Activated CD4-positive, alpha-beta T cell treated with anti-CD3 and anti-CD28 coated beads for 36 hours (primary cell): ENCODE measurements at regions of chr20 and their contacts with region 1.

Region 1: DNA sequence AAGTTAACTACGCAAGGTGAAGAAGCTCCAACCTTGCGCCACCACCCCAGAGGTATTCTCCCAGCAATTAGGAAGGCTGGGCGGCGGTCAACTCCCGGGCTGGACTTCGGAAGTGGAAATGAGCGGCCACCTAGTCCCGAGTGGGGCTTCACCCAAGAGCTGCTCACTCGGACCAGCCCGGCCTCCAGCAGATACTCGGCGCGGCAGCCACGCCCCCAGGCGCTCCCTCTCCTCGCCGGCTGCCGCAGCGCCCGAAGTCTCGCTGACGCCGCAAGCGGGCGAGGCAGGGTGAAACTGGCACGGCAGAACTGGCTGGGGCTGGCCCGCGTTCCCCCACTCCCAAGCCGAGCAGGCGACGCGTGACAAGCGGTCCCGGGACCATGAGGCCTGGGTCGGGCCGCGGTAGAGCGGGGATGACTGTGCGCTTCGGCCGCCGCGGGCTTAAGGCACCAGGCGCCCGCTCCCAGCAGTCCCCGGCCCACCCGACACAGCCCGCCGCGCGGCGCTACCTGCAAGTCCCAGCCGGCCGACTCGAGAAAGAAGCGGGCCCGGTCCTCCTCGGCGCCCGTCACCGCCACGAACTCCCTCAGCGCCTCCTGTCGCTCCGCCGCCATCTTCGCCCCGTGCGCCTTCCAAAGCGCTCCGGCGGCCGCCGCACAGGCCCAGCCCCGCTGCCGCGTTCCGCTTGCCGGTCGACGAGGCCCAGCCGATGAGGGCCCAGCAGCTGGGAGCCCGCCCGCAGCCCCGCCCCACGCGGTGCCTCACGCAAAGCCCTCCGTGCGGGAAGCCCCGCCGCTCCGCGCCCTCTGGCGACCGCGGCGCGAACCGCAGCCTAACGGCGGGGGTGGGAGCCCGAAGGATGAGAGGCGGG is at the start of gene NSFL1C:
- DNase-seq: peak; percentile 99
- ATAC-seq: peak; percentile 96
- H3K4me3 Mint-ChIP-seq: peak within 1 kb of the TSS; percentile 85
- H3K27ac Mint-ChIP-seq: peak within 1 kb of the TSS; percentile 85
- H3K4me1 Mint-ChIP-seq: peaks cover 42% of the 10 kb centered on the region
- H3K27me3 Mint-ChIP-seq: peaks cover 6% of the 10 kb centered on the region
- total RNA-seq, gene NSFL1C: 71.3 to 78.1 TPM

Region 2: GRCh38 chr20:1118336-1119127 is 347.9 kb before region 1 on chr20 and contains the start of gene PSMF1:
- CTCF ChIA-PET with region 1: interaction called, 4 read pairs
- POLR2A ChIA-PET with region 1: no interaction called
- intact Hi-C with region 1: loop called (anchors 1 to 10 kb)
- DNase-seq: peak; percentile 97
- ATAC-seq: peak; percentile 97
- H3K4me3 Mint-ChIP-seq: peak within 1 kb of the TSS; percentile 94
- H3K27ac Mint-ChIP-seq: peak within 1 kb of the TSS; percentile 93
- H3K4me1 Mint-ChIP-seq: peaks cover 49% of the 10 kb centered on the region
- H3K27me3 Mint-ChIP-seq: no peaks in the 10 kb centered on the region
- total RNA-seq, gene PSMF1: 143 to 178 TPM

Region 3: DNA sequence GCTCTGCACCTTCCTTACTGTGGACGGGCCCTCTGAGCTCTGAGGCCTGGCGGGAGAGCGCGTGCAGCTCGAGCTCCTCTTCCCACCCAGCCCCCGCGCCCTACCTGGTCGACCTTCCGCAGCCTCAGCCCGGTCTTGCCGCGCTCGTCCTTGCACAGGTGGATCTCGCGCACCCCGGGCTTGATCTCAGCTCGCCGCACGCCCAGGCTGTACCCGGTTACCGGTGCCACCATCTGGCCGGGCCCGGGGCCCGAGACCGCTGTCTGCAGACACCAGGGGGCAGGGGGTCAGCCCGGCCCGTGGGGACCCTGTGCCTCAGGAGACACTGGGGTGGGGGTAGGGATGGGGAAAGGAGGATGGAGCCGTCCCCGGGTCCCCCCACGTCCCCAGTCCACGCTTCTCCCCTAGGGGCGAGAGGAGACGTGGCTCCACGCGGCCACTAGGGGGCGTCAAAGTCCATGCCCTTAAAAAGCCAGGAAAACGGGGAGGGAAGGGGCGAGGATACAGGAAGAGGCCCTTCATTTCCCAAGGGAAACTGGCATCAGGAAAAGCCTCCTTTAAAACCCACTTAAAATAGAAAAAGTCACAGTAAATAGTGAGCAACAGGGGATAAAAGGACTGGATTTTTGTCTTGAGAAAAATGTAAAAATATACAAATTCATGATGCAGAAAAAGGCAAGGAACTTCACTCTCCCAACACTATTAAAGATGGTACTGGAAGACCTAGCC is 153.0 kb before region 1 on chr20:
- CTCF ChIA-PET with region 1: interaction called, 4 read pairs
- POLR2A ChIA-PET with region 1: interaction called, 3 read pairs
- intact Hi-C with region 1: loop called in 1 of 2 experiments (anchors 1 kb)
- DNase-seq: peak; percentile 82
- ATAC-seq: peak; percentile 89
- H3K4me3 Mint-ChIP-seq: no peak overlapping the region
- H3K27ac Mint-ChIP-seq: no peak overlapping the region
- H3K4me1 Mint-ChIP-seq: peaks cover 3% of the 10 kb centered on the region
- H3K27me3 Mint-ChIP-seq: no peaks in the 10 kb centered on the region

Region 4: GRCh38 chr20:1392823-1393506 is 73.5 kb before region 1 on chr20 and contains the start of gene FKBP1A:
- CTCF ChIA-PET with region 1: interaction called, 3 read pairs
- POLR2A ChIA-PET with region 1: no interaction called
- intact Hi-C with region 1: loop called (anchors 1 kb)
- DNase-seq: peak; percentile 95
- ATAC-seq: peak; percentile 82
- H3K4me3 Mint-ChIP-seq: peak within 1 kb of the TSS; percentile 93
- H3K27ac Mint-ChIP-seq: peak within 1 kb of the TSS; percentile 94
- H3K4me1 Mint-ChIP-seq: peaks cover 56% of the 10 kb centered on the region
- H3K27me3 Mint-ChIP-seq: no peaks in the 10 kb centered on the region
- total RNA-seq, gene FKBP1A: 265 to 316 TPM

Region 5: DNA sequence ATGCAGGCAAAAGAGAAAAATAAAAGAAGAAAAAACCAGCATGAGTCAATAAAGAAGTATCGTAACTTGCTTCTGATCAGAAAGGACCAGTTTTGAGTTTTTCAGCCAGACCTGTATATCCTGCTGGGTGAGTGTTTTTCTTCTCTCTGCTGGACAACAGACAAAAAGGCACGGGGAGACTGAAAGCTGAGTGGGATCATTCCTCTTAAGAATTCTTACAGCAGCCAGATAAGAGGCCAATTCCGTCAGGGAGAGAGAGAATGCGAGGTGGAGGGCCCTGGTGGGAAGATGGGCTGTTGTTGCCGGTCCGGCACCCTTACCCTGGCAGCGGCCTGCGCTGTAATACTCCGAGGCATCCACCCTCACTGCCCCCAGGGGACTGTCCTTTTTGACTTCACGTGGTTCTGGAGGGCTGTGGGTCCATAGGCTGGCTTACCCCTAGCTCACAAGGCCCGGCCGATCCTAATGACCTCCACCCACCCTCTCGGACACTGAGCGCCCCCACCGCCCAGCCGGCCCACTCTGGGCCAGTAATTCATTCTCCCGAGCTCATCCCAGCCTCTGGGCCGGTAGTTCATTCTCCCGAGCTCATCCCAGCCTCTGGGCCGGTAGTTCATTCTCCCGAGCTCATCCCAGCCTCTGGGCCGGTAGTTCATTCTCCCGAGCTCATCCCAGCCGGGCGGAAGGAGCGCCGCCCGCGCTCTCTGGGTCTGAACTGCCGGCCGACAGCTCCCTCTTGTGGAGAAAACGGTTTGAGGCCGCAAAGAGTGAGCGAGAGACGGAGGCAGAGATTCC is 310.4 kb after region 1 on chr20:
- CTCF ChIA-PET with region 1: interaction called, 10 read pairs
- POLR2A ChIA-PET with region 1: interaction called, 5 read pairs
- intact Hi-C with region 1: loop called in 1 of 2 experiments (anchors 1 kb)
- DNase-seq: peak; percentile 91
- ATAC-seq: peak; percentile 92
- H3K4me3 Mint-ChIP-seq: peak overlapping the region; percentile 66
- H3K27ac Mint-ChIP-seq: peak overlapping the region; percentile 52
- H3K4me1 Mint-ChIP-seq: peaks cover 15% of the 10 kb centered on the region
- H3K27me3 Mint-ChIP-seq: peaks cover 3% of the 10 kb centered on the region

Region 6: DNA sequence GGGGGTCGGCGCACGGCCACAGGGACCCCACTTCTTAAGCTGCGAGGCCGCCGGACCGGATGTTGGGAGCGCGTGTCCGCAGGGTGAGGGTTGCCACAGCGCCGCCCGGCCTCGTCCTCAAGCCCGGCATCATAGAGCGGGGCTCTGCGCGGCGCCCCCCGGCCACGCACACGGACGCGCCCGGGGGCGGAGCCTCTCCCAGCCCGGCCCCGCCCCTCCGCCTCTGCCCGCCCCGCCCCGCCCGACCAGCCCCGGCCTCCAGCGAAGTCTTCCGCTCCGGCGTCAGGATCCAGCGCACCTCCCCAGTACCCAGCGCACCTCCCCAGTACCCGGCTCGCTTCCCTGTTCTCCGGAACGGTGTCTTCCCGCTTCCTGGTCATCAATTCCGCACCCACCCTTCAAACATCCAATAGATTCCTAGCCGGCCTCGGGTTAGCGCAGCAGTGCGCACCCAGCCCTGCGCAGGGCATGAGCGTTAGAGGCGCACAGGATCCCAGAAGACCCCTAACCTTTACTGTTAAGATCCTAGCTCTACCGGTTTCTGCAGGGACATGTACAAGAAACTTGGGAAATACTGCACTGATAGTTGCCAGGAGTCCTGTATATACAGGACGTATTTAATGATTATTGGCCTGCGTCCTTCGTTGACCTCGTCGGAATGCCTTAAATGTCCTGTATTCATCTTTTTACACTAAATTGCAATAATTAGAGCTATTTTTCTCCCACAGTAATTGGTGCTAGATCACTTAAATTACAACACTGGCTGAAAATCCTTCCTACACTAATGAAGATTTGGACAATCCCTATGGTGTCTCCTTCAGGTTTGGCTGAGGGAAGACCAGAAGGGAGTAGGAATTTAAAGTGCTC is 1941.6 kb after region 1 on chr20:
- CTCF ChIA-PET with region 1: no interaction called
- POLR2A ChIA-PET with region 1: no interaction called
- intact Hi-C with region 1: loop called in 1 of 2 experiments (anchors 10 kb)
- DNase-seq: peak; percentile 80
- ATAC-seq: peak; percentile 64
- H3K4me3 Mint-ChIP-seq: peak overlapping the region; percentile 83
- H3K27ac Mint-ChIP-seq: peak overlapping the region; percentile 88
- H3K4me1 Mint-ChIP-seq: peaks cover 32% of the 10 kb centered on the region
- H3K27me3 Mint-ChIP-seq: peaks cover 3% of the 10 kb centered on the region